ENCODE measurements at regions of chr17 and their contacts with region 1.

Region 1: GRCh38 chr17:73429440-73430164 is 117.8 kb upstream of the CDC42EP4 start:
- DNase-seq: no peak
- H3K4me3 ChIP-seq: no peak overlapping the region
- H3K27ac ChIP-seq: no peak overlapping the region
- H3K4me1 ChIP-seq: peaks cover 10% of the 10 kb centered on the region
- H3K27me3 ChIP-seq: no peaks in the 10 kb centered on the region
- CTCF ChIP-seq: peak; percentile 96 to 98 (median 96)
- POLR2A ChIP-seq: no peak

Region 2: DNA sequence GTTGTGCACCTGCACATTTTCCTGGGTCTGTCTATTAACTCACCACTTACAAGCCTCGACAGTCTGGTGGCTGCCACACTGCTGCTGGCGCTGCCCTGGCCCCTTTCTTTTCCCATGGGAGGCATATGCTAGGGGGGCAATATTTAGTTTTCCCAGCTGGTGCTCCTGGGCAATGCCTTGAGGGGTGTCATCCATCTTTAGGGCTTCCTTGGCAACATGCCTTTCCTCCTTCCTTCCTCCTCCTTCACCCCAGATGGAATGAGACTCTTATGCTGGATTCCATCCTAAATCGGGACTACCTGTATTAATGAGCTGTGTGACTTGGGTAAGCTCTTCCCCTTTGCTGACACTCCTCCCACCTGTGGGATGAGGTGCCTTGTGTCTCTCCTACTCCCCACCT is 53.0 kb before region 1 on chr17:
- intact Hi-C with region 1: no loop called
- DNase-seq: no peak
- H3K4me3 ChIP-seq: no peak overlapping the region
- H3K27ac ChIP-seq: no peak overlapping the region
- H3K4me1 ChIP-seq: no peaks in the 10 kb centered on the region
- H3K27me3 ChIP-seq: no peaks in the 10 kb centered on the region
- CTCF ChIP-seq: no peak
- POLR2A ChIP-seq: no peak

Region 3: GRCh38 chr17:73387746-73388577 is 41.6 kb before region 1 on chr17:
- intact Hi-C with region 1: no loop called
- DNase-seq: no peak
- H3K4me3 ChIP-seq: no peak overlapping the region
- H3K27ac ChIP-seq: no peak overlapping the region
- H3K4me1 ChIP-seq: no peaks in the 10 kb centered on the region
- H3K27me3 ChIP-seq: no peaks in the 10 kb centered on the region
- CTCF ChIP-seq: no peak
- POLR2A ChIP-seq: no peak

Region 4: DNA sequence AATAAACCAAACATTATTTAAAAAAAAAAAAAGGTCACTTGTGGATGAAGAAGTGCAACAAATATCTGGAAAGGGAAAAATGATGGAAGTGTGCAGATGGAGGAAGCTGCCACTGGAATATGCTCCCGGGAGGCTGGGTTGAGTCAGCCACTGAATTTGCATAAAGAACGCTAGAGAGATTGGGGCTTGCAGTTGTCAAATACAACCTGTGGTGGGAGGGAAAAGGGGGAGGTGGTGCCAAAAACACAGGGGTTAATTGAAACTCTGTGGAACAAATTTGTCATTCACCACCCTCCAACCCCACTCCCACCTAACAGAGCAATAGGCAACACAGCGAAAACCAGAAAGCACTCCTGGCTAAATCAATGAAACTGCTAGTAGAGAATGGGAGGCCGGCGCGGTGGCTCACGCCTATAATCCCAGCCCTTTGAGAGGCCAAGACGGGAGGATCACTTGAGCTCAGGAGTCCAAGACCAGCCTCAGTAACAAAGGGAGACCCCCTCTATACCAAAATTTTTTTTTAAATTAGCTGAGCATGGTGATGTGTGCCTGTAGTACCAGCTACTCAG is 736.3 kb after region 1 on chr17:
- intact Hi-C with region 1: loop called (anchors 5 kb)
- DNase-seq: no peak
- H3K4me3 ChIP-seq: no peak overlapping the region
- H3K27ac ChIP-seq: no peak overlapping the region
- H3K4me1 ChIP-seq: no peaks in the 10 kb centered on the region
- H3K27me3 ChIP-seq: no peaks in the 10 kb centered on the region
- CTCF ChIP-seq: no peak
- POLR2A ChIP-seq: no peak

Measured in vagina (tissue), 2 donors.